Naive thymus-derived CD4-positive, alpha-beta T cell (primary cell): ENCODE measurements at regions of chr12 and their contacts with region 1.

Region 1: DNA sequence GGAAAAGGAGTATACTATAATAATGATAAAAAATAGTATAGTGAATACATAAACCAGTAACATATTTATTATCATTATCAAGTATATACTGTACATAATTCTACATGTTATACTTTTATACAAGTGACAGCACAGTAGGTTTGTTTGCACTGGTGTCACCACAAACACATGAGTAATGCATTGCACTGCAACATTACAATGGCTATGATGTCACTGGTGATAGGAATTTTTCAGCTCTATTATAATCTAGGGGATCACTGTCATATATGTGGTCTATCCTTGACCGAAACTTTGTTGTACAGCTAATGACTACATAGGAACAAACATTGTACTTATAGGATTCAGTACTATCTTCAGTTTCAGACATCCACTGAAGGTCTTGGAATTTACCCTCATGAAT is 165.8 kb upstream of the SYT1 start:
- DNase-seq: no peak
- ATAC-seq: no peak
- H3K4me3 ChIP-seq: no peak overlapping the region
- H3K4me3 Mint-ChIP-seq: no peak overlapping the region
- H3K27ac ChIP-seq: no peak overlapping the region
- H3K27ac Mint-ChIP-seq: no peak overlapping the region
- H3K4me1 ChIP-seq: no peaks in the 10 kb centered on the region
- H3K4me1 Mint-ChIP-seq: no peaks in the 10 kb centered on the region
- H3K27me3 ChIP-seq: no peaks in the 10 kb centered on the region
- H3K27me3 Mint-ChIP-seq: no peaks in the 10 kb centered on the region

Region 2: DNA sequence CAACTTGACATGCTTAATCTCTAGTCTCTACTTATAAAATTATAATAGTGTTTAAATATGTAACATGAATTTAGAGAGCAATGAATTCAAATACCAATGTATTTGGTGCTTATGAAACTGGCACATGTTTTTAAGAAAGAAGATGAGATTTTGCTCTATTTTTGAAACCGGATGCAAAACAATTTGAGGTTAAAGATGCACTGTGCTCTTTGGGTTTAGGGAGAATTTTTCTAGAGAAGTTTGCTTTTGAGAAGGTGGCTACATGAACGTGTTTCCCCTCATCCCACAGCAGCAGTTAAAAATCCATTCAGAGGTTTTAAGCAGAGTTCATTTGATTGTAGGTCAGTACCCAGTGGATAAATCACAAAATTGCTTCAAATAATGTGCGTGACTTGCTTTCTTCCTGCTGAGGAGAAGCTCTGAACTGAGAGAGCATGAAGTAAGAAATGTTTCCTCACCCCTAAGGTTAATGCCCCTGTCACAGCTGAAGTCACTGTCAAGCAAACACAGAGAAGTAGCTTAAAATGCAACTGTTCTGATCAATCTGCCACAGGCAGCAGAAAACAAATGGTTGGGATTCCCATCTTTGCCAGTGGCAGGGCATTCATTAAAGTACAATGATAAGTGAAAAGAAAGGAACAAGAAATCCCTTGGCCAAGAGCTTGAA is 76.1 kb before region 1 on chr12:
- CTCF ChIA-PET with region 1: no interaction called
- POLR2A ChIA-PET with region 1: no interaction called
- intact Hi-C with region 1: loop called in 1 of 2 experiments (anchors 5 kb)
- DNase-seq: no peak
- ATAC-seq: no peak
- H3K4me3 ChIP-seq: no peak overlapping the region
- H3K4me3 Mint-ChIP-seq: no peak overlapping the region
- H3K27ac ChIP-seq: no peak overlapping the region
- H3K27ac Mint-ChIP-seq: no peak overlapping the region
- H3K4me1 ChIP-seq: no peaks in the 10 kb centered on the region
- H3K4me1 Mint-ChIP-seq: no peaks in the 10 kb centered on the region
- H3K27me3 ChIP-seq: no peaks in the 10 kb centered on the region
- H3K27me3 Mint-ChIP-seq: no peaks in the 10 kb centered on the region